ENCODE measurements at regions of chr2 and their contacts with region 1.

Region 1: DNA sequence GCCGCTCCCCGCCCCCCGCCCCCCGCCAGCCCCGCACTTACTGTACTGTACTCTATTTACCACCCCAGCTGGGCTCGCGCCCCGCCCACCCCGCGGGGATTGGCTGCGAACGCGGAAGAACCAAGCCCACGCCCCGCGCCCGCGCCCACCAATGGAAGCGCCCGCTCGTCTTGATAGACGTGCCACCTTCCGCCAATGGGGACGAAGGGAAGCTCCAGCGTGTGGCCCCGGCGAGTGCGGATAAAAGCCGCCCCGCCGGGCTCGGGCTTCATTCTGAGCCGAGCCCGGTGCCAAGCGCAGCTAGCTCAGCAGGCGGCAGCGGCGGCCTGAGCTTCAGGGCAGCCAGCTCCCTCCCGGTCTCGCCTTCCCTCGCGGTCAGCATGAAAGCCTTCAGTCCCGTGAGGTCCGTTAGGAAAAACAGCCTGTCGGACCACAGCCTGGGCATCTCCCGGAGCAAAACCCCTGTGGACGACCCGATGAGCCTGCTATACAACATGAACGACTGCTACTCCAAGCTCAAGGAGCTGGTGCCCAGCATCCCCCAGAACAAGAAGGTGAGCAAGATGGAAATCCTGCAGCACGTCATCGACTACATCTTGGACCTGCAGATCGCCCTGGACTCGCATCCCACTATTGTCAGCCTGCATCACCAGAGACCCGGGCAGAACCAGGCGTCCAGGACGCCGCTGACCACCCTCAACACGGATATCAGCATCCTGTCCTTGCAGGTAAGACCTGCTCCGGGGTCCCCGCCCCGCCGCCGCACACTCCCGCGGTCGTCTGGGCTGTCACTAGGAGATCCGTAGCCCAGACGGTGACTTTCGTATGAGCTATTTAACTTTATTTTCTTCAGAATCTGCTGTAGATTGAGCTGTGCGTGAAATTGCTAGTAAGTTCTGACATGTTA is at the start of gene ID2:
- DNase-seq: peak; percentile 97
- ATAC-seq: peak; percentile 57
- H3K4me3 ChIP-seq: peak within 1 kb of the TSS; percentile 79 to 80
- H3K27ac ChIP-seq: peak within 1 kb of the TSS; percentile 97
- H3K4me1 ChIP-seq: peaks cover 10 to 64% of the 10 kb centered on the region in 2 experiments
- H3K27me3 ChIP-seq: no peaks in the 10 kb centered on the region
- CTCF ChIP-seq: no peak
- POLR2A ChIP-seq: peak; percentile 98
- RAD21 ChIP-seq: no peak
- total RNA-seq, gene ID2: 112 TPM

Region 2: DNA sequence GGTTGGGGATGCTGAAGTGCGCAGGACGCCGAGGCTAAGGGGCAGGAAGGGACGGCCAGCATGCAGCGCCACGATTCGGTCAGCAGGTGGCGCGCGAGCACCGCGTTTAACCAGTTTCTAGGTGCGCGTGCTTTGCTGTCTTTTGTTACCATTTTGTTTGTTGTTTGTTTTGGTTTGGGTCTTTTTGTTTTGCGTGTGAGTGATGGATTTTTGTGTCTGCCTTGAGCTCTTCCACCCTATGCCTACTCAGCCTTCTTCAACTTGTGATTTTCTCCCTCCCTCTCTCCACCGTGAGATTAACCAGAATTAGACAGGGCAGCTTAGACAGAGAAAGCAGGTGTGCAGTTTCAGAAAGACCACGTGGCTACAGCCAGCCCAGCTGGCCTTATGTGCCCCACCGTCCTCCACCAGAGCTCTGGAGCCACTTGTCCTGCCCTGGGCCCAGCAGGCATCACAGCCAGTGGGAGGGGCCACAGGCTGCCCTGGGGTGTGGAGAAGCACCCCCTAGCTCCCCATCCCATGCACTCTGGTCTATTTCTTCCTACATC is 1584.6 kb before region 1 on chr2:
- CTCF ChIA-PET with region 1: interaction called, 3 read pairs
- POLR2A ChIA-PET with region 1: no interaction called
- RAD21 ChIA-PET with region 1: no interaction called
- intact Hi-C with region 1: loop called (anchors 5 kb)
- DNase-seq: peak; percentile 36
- ATAC-seq: peak; percentile 97
- H3K4me3 ChIP-seq: peak overlapping the region; percentile 10 to 33; a peak in 2 of 4 replicates
- H3K27ac ChIP-seq: no peak overlapping the region
- H3K4me1 ChIP-seq: peaks cover 5 to 9% of the 10 kb centered on the region in 2 experiments
- H3K27me3 ChIP-seq: no peaks in the 10 kb centered on the region
- CTCF ChIP-seq: peak; percentile 65 to 97 (median 89)
- POLR2A ChIP-seq: no peak
- RAD21 ChIP-seq: peak; percentile 92

Region 3: DNA sequence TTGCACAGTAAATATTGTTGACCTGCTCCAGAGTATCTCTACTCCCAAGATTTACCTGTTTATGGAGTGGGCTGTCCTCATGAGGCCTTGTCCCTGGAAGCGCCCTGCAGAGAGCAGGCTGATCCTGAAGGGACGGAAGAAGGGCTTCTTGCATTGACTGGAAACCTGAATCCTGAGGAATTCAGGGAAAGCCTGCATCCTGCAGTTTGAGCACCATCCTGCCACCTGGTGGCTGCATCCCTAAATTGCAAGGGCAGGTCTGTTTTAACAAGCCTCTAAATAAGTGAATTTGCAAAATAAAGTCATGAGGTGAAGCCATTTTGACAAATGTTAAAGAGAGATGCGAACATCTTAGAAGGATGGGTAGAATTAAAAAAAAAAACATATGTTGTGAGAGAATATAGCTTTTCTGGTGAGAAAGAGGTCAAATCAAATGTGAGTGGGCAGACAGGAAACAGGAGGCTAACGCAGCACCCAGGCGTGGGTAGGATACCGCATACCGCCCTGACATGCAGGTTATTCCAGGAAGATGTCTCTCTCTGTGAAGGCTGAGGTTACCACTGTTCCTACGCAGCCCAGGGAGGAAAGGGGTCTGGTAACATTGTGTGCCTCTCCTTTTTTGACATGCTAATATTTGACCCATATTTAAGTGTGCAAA is 1009.9 kb before region 1 on chr2:
- CTCF ChIA-PET with region 1: no interaction called
- POLR2A ChIA-PET with region 1: no interaction called
- RAD21 ChIA-PET with region 1: no interaction called
- intact Hi-C with region 1: loop called (anchors 5 kb)
- DNase-seq: peak; percentile 54
- ATAC-seq: peak; percentile 70
- H3K4me3 ChIP-seq: no peak overlapping the region
- H3K27ac ChIP-seq: no peak overlapping the region
- H3K4me1 ChIP-seq: no peaks in the 10 kb centered on the region
- H3K27me3 ChIP-seq: 0 out of 2 replicates have a peak, but pooled peaks cover 3% of the 10 kb centered on the region
- CTCF ChIP-seq: peak; percentile 57 to 87 (median 79); a peak in 5 of 6 replicates
- POLR2A ChIP-seq: no peak
- RAD21 ChIP-seq: peak; percentile 66

Region 4: DNA sequence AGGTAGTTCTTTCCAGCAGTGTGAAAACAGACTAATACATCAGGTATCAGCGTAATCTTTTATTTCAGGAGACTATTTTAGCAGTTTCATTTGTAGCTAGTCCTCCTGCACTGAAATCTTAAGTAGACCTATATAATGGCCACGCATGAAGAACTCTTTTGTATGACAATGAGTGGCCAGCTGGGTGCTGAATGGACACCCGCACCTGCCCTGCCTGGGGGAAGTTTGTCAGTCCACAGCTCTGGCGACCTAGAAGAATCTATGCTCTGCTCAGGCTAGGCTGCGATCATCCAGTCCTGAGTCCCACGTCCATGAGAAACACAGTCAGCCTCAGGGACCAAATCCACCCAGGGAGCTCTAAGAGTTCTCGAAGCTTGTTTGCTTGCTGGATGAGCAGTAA is 709.4 kb before region 1 on chr2:
- CTCF ChIA-PET with region 1: no interaction called
- POLR2A ChIA-PET with region 1: no interaction called
- RAD21 ChIA-PET with region 1: no interaction called
- intact Hi-C with region 1: no loop called
- DNase-seq: no peak
- ATAC-seq: no peak
- H3K4me3 ChIP-seq: no peak overlapping the region
- H3K27ac ChIP-seq: no peak overlapping the region
- H3K4me1 ChIP-seq: no peaks in the 10 kb centered on the region
- H3K27me3 ChIP-seq: peaks cover 73% of the 10 kb centered on the region
- CTCF ChIP-seq: no peak
- POLR2A ChIP-seq: no peak
- RAD21 ChIP-seq: no peak

Region 5: GRCh38 chr2:8312861-8313830 is 368.9 kb before region 1 on chr2:
- CTCF ChIA-PET with region 1: no interaction called
- POLR2A ChIA-PET with region 1: interaction called, 3 read pairs
- RAD21 ChIA-PET with region 1: no interaction called
- intact Hi-C with region 1: loop called (anchors 5 kb)
- DNase-seq: peak; percentile 47
- ATAC-seq: peak; percentile 71
- H3K4me3 ChIP-seq: peak overlapping the region in 1 of 2 experiments; percentile 31; a peak in 2 of 4 replicates
- H3K27ac ChIP-seq: no peak overlapping the region; the same call in 1 of the 2 replicates
- H3K4me1 ChIP-seq: peaks cover 23 to 37% of the 10 kb centered on the region in 2 experiments
- H3K27me3 ChIP-seq: no peaks in the 10 kb centered on the region
- CTCF ChIP-seq: no peak
- POLR2A ChIP-seq: no peak
- RAD21 ChIP-seq: 0 out of 2 replicates have a peak, but pooled peaks have one; percentile 11

Region 6: DNA sequence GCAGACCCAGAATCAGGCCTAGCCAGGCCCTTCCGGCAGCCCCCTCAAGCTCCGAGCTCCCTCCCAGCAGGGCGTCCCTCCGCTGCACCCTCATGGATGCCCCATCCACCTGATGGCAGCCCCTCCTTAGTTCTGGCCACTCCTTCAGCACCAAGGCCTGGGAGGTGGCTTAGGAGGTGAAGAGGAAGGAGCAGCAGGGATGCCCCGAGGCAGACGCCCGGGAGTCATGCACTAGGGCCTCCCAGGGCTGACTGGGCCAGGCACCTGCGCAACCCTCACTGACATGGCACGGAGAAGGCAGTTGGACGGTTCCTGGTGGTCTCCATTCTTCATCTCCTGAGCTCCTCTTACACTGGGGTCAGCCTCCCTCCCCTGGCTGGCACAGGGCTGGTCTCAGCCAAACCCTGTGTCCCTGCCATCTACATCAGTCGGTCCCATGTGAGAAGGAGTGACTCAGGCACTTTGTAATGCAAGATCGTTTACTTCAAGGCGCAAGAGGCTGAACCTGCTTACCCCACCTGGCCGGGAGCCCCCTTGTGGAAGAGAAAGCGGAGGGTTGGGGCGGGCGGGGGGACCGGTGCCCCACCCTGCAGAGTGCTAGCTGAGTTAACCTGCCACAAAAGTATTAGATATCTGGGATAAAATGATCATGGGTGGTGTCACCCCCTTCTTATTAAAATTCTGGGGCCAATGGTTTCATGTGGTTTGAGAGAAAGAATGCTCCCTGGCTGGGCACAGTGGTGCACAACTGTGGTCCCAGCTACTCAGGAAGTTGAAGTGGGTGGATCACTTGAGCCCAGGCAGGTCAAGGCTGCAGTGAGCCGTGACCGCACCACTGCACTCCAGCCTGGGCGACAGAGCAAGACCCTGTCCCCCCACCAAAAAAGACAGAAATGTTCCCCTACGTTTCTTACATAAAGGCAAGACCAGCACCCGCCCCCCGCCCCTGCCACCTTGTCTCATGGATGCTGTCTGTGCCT is 53.5 kb before region 1 on chr2:
- CTCF ChIA-PET with region 1: interaction called, 3 read pairs
- POLR2A ChIA-PET with region 1: interaction called, 26 read pairs
- RAD21 ChIA-PET with region 1: interaction called, 3 to 4 read pairs
- intact Hi-C with region 1: loop called (anchors 1 kb)
- DNase-seq: peak; percentile 75
- ATAC-seq: peak; percentile 81
- H3K4me3 ChIP-seq: peak overlapping the region; percentile 36 to 56
- H3K27ac ChIP-seq: peak overlapping the region; percentile 91
- H3K4me1 ChIP-seq: peaks cover 68 to 91% of the 10 kb centered on the region in 2 experiments
- H3K27me3 ChIP-seq: no peaks in the 10 kb centered on the region
- CTCF ChIP-seq: peak in 2 of 3 experiments; percentile 45 to 55; a peak in 3 of 6 replicates
- POLR2A ChIP-seq: no peak
- RAD21 ChIP-seq: no peak

Region 7: GRCh38 chr2:8662239-8662895 is 19.7 kb before region 1 on chr2:
- CTCF ChIA-PET with region 1: interaction called, 5 read pairs
- POLR2A ChIA-PET with region 1: interaction called, 8 read pairs
- RAD21 ChIA-PET with region 1: interaction called in 1 of 2 experiments, 4 read pairs
- intact Hi-C with region 1: loop called (anchors 2 kb)
- DNase-seq: peak; percentile 56
- ATAC-seq: peak; percentile 92
- H3K4me3 ChIP-seq: peak overlapping the region in 1 of 2 experiments; percentile 34; a peak in 2 of 4 replicates
- H3K27ac ChIP-seq: peak overlapping the region; percentile 41; the same call in 1 of the 2 replicates
- H3K4me1 ChIP-seq: peaks cover 10 to 26% of the 10 kb centered on the region in 2 experiments
- H3K27me3 ChIP-seq: no peaks in the 10 kb centered on the region
- CTCF ChIP-seq: peak; percentile 16 to 40 (median 31); a peak in 4 of 6 replicates
- POLR2A ChIP-seq: no peak
- RAD21 ChIP-seq: peak; percentile 77